Gastrocnemius medialis (tissue), 4 donors: ENCODE measurements at regions of chr7 and their contacts with region 1.

Region 1: DNA sequence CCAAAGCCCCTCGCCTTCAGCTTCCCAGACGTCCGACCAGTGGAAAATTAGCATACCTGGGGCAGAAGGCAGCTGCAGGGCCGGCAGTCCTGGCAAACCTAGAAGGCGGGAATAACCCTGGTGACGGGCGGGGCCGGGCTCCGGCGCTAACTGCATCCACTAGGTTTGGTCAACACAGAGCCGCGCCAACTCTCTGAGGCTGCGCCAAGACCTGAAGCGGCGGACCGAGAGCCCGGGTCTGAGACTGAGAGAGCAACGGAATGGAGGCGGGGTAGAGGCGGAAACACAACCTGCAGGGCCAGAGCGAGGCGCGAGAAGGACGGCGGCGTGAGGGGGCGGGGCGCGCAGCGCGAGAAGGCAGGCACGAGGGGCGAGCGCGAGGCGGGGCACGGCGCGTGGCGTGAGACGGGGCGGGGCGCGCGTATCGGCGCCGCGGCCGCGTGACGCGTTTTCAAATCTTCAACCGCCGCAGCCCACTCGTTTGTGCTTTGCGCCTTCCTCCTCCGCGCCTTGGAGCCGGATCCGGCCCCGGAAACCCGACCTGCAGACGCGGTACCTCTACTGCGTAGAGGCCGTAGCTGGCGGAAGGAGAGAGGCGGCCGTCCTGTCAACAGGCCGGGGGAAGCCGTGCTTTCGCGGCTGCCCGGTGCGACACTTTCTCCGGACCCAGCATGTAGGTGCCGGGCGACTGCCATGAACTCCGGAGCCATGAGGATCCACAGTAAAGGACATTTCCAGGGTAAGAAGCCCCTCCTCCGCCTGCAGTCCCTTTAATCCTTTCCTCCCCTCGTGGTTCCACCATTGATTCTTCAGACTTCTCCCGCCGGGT is at the starts of genes DBF4 and SLC25A40:
- DNase-seq: peak; percentile 90 to 92
- ATAC-seq: peak; percentile 88 to 95
- H3K4me3 ChIP-seq: peak within 1 kb of the TSS; percentile 79 to 96 (median 86)
- H3K27ac ChIP-seq: peak within 1 kb of the TSS; percentile 93 to 97 (median 95)
- H3K4me1 ChIP-seq: peaks cover 28 to 33% of the 10 kb centered on the region in 2 donors
- H3K27me3 ChIP-seq: no peaks in the 10 kb centered on the region
- CTCF ChIP-seq: peak in 1 of 5 experiments; percentile 24
- POLR2A ChIP-seq: peak; percentile 65 to 87
- total RNA-seq, gene DBF4: 2.2 to 5.9 (median 3.2) TPM
- total RNA-seq, gene SLC25A40: 3.2 to 14.8 (median 8.6) TPM

Region 2: GRCh38 chr7:87312215-87312865 is 563.9 kb before region 1 on chr7:
- in situ Hi-C with region 1: no loop called
- intact Hi-C with region 1: loop called (anchors 10 kb)
- DNase-seq: peak in 1 of 2 donors; percentile 23
- ATAC-seq: peak; percentile 74 to 88
- H3K4me3 ChIP-seq: no peak overlapping the region
- H3K27ac ChIP-seq: no peak overlapping the region
- H3K4me1 ChIP-seq: no peaks in the 10 kb centered on the region
- H3K27me3 ChIP-seq: no peaks in the 10 kb centered on the region
- CTCF ChIP-seq: peak; percentile 86 to 97 (median 92)
- POLR2A ChIP-seq: no peak

Region 3: GRCh38 chr7:87416682-87417587 is 459.3 kb before region 1 on chr7:
- in situ Hi-C with region 1: no loop called
- intact Hi-C with region 1: loop called (anchors 10 kb)
- DNase-seq: peak; percentile 18 to 32
- ATAC-seq: peak; percentile 45 to 53
- H3K4me3 ChIP-seq: no peak overlapping the region
- H3K27ac ChIP-seq: no peak overlapping the region
- H3K4me1 ChIP-seq: peaks cover 13 to 14% of the 10 kb centered on the region in 2 donors
- H3K27me3 ChIP-seq: no peaks in the 10 kb centered on the region
- CTCF ChIP-seq: peak; percentile 60 to 69 (median 64)
- POLR2A ChIP-seq: no peak

Region 4: GRCh38 chr7:87628780-87629569 is 247.3 kb before region 1 on chr7:
- in situ Hi-C with region 1: no loop called
- intact Hi-C with region 1: loop called (anchors 5 kb)
- DNase-seq: peak in 1 of 2 donors; percentile 13
- ATAC-seq: peak; percentile 30 to 49
- H3K4me3 ChIP-seq: peak overlapping the region; percentile 72 to 78 (median 72)
- H3K27ac ChIP-seq: peak overlapping the region; percentile 19 to 55 (median 53)
- H3K4me1 ChIP-seq: peaks cover 0 to 4% of the 10 kb centered on the region in 2 donors
- H3K27me3 ChIP-seq: no peaks in the 10 kb centered on the region
- CTCF ChIP-seq: no peak
- POLR2A ChIP-seq: no peak

Region 5: GRCh38 chr7:88219781-88220747 is 343.8 kb after region 1 on chr7 and contains the start of gene SRI:
- in situ Hi-C with region 1: loop called in 1 of 4 experiments (anchors 25 kb)
- intact Hi-C with region 1: no loop called
- DNase-seq: peak; percentile 63 to 73
- ATAC-seq: peak; percentile 92 to 93
- H3K4me3 ChIP-seq: peak within 1 kb of the TSS; percentile 86 to 98 (median 91)
- H3K27ac ChIP-seq: peak within 1 kb of the TSS; percentile 77 to 88 (median 78)
- H3K4me1 ChIP-seq: peaks cover 2 to 16% of the 10 kb centered on the region in 2 donors
- H3K27me3 ChIP-seq: no peaks in the 10 kb centered on the region
- CTCF ChIP-seq: peak; percentile 65 to 94 (median 90)
- POLR2A ChIP-seq: peak; percentile 41 to 64
- total RNA-seq, gene SRI: 12.3 to 33.1 (median 17.3) TPM

Region 6: DNA sequence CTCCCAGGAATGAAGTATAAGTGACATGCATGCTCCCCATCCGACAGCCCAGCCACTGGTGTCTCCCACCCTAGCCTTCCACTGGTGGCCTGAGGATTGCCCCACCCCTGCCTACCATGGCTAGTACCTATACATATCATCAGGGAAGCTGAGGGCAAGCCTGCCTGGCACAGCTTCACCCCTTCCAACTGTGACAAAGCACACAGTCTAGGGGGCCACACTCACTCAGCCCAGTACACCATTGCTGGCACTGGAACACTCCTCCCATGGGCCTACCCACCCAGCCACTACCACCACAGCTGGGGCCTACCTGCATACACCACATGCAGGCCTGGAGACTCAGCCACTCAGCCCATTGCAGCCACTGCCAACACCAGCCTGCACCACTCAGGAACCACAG is 1884.9 kb after region 1 on chr7:
- in situ Hi-C with region 1: no loop called
- intact Hi-C with region 1: no loop called
- DNase-seq: no peak
- ATAC-seq: no peak
- H3K4me3 ChIP-seq: no peak overlapping the region
- H3K27ac ChIP-seq: no peak overlapping the region
- H3K4me1 ChIP-seq: no peaks in the 10 kb centered on the region
- H3K27me3 ChIP-seq: no peaks in the 10 kb centered on the region
- CTCF ChIP-seq: no peak
- POLR2A ChIP-seq: no peak